H1 (cell line): ENCODE measurements at regions of chr14 and their contacts with region 1.

Region 1: DNA sequence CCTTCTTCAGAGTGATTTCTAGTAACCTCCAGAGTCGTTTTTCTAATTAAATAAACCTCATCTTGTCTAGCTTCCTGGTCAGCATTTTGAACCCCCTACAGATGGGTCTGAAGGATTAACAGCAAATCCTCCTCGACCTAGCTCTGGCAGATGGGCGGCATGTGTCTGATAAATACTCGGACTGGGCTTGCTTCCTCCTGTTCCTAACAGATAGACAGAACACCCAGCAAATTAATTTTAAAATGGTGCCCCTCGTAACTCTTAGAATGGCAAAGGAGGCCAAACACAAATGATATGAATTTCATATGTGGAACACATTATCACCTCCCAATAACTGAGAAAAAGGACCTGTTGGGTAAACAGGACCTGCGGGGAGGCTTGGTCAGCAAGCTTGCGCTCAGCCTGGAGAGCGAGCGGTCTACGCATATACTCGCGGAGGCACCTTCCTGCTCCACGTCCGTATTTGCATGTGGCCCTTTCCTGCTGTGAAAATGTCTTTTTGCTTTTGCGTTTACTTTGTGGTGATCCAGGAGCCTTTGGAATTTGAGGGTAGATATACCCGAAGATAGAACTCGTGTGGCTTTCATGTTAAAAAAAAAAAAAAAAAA is 79.6 kb downstream of the OTX2 start:
- DNase-seq: no peak
- H3K4me3 ChIP-seq: peak overlapping the region in 1 of 4 experiments; percentile 6; a peak in 2 of 8 replicates
- H3K27ac ChIP-seq: no peak overlapping the region
- H3K4me1 ChIP-seq: peaks cover 5 to 24% (median 19%) of the 10 kb centered on the region in 4 experiments
- H3K27me3 ChIP-seq: peaks cover 0 to 12% (median 10%) of the 10 kb centered on the region in 4 experiments; a peak in 4 of 7 replicates
- CTCF ChIP-seq: no peak
- EP300 ChIP-seq: no peak
- POLR2A ChIP-seq: no peak
- RAD21 ChIP-seq: no peak

Region 2: DNA sequence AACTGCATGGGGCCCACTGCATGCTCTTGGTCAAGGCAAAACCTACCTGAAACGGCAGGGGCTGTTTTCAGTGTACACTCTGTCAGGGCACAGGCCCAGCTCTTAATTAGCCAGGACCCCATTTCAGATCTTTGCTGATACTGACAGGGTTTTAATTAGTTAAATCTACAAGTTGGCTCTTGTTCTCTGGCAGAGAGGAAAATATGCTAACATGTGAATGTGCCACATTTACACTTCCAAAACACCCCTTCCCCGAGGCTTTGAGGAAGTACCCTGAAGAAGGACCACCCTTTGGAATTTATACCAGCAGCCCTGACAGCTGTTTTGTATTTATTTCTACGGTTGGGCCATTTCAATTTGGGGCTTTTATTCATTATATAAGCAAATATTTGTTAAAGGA is 13.4 kb after region 1 on chr14:
- CTCF ChIA-PET with region 1: interaction called, 13 read pairs
- POLR2A ChIA-PET with region 1: no interaction called
- DNase-seq: no peak
- H3K4me3 ChIP-seq: no peak overlapping the region
- H3K27ac ChIP-seq: no peak overlapping the region
- H3K4me1 ChIP-seq: peaks cover 0 to 17% (median 2%) of the 10 kb centered on the region in 4 experiments; a peak in 4 of 7 replicates
- H3K27me3 ChIP-seq: no peaks in the 10 kb centered on the region
- CTCF ChIP-seq: no peak
- EP300 ChIP-seq: no peak
- POLR2A ChIP-seq: no peak
- RAD21 ChIP-seq: no peak